ENCODE measurements at regions of chr16 and their contacts with region 1.

Region 1: DNA sequence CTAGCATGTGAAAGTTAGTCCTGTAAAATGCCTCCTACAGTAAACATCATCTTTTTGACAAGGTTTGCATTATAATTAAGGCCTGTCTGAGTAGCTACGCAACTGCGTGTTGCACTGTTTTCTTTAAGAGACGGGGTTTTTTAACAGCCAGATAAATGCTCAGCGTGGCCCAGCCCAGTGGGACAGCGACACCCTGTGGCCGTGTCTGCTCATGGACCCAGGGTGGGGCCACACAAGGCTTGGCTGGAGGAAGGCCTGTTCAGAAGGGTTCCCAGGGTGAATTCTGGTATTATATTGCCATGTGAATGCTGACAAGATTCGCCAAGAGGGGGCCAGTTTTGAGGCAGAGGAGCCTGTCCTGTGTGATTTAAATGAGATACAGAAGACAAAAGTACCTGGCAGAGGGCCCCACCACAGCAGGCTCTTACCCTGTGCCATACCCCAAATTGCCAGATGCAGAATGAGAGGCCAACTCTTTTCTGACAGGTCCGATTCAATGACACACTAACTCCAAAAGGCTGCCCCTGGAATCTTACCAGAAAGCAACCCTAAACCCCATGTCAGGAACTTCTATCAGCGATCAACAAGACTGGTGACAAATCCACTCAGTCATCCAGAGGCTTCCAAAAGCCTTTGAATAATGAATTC is 65.9 kb upstream of the IRX6 start:
- DNase-seq: peak; percentile 58
- ATAC-seq: peak; percentile 98
- H3K4me3 ChIP-seq: no peak overlapping the region
- H3K27ac ChIP-seq: no peak overlapping the region
- H3K4me1 ChIP-seq: no peaks in the 10 kb centered on the region
- H3K27me3 ChIP-seq: peaks cover 4% of the 10 kb centered on the region; the same call in 1 of the 2 replicates
- CTCF ChIP-seq: peak; percentile 65 to 95 (median 95)
- POLR2A ChIP-seq: no peak
- RAD21 ChIP-seq: peak; percentile 87

Region 2: DNA sequence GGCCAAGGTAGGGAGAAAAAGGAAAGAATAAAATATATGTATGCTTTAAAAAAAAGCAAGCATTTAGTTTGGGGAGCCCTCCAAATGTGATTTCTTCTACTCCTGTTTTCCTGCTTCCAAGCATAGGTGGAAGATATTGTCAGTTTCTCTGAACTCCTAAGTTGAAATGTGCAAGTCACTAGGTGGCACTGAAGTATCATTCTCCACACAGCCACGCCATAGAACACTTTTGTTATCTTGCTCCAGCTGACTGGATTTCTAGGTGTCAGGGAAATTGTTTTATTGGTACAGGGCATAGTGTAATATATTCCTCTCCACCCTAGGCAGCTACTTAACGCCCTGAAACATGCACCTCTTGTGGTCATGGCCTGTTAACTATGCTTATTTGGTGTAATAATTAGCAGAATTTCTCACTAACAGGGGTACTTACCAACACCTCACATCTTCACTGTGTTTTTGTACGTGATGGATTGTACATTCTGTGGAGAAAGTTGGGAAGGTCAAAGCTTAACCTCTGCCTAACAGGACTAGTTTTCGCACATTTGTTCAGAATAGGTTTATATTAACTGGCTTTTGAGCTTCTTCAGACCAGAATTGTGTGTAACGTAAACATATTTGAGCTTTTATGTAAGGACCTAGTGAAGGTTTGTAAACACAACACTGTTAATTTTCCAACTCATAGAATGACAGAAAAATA is 1484.8 kb before region 1 on chr16:
- CTCF ChIA-PET with region 1: no interaction called
- POLR2A ChIA-PET with region 1: no interaction called
- RAD21 ChIA-PET with region 1: no interaction called
- intact Hi-C with region 1: loop called (anchors 5 kb)
- DNase-seq: no peak
- ATAC-seq: peak; percentile 51
- H3K4me3 ChIP-seq: no peak overlapping the region
- H3K27ac ChIP-seq: no peak overlapping the region
- H3K4me1 ChIP-seq: peaks cover 32 to 40% of the 10 kb centered on the region in 2 experiments
- H3K27me3 ChIP-seq: no peaks in the 10 kb centered on the region
- CTCF ChIP-seq: peak; percentile 46 to 68 (median 56); a peak in 4 of 6 replicates
- POLR2A ChIP-seq: no peak
- RAD21 ChIP-seq: peak; percentile 91

Region 3: DNA sequence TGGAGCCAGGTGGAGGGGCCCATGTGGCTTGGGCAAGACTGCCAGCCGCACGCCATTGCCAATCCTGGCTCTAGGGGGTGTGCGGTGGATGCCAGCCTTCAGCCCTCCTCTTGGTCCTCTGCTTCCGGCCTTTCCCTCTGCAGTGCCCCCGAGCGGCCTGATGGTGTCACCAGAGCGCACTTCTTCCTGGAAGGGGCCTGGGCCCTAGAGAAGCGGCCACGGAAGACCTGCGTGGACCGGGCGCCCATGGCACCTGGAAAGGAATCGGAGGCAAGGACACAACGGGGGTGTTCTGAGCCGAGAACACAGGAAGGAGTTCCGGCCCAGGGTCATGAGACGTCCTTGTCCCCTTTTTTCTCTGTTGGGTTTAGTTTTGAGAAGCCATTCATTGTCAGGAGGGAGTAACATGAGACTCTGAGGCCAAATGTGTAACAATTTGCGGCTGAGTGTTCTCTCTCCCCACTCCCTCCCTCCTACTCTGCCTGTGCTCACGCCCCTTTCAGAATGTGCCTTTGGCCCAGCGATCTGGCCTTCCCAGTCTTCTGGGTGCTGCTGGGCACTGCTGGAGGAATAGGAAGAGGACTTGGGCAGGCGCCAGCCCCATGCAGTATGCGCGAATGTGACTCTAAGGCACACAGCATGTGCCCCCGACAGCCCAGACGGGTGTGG is 1064.3 kb before region 1 on chr16:
- CTCF ChIA-PET with region 1: no interaction called
- POLR2A ChIA-PET with region 1: no interaction called
- RAD21 ChIA-PET with region 1: no interaction called
- intact Hi-C with region 1: loop called (anchors 10 kb)
- DNase-seq: peak; percentile 59
- ATAC-seq: peak; percentile 99
- H3K4me3 ChIP-seq: peak overlapping the region; percentile 21 to 28; a peak in 3 of 4 replicates
- H3K27ac ChIP-seq: peak overlapping the region; percentile 13; the same call in 1 of the 2 replicates
- H3K4me1 ChIP-seq: peaks cover 0 to 9% of the 10 kb centered on the region in 2 experiments; a peak in 3 of 4 replicates
- H3K27me3 ChIP-seq: no peaks in the 10 kb centered on the region; the same call in 1 of the 2 replicates
- CTCF ChIP-seq: peak; percentile 77 to 94 (median 90)
- POLR2A ChIP-seq: no peak
- RAD21 ChIP-seq: peak; percentile 72

Region 4: GRCh38 chr16:54633943-54634362 is 624.1 kb before region 1 on chr16:
- CTCF ChIA-PET with region 1: no interaction called
- POLR2A ChIA-PET with region 1: no interaction called
- RAD21 ChIA-PET with region 1: no interaction called
- intact Hi-C with region 1: loop called (anchors 2 kb)
- DNase-seq: peak; percentile 39
- ATAC-seq: peak; percentile 88
- H3K4me3 ChIP-seq: peak overlapping the region; percentile 11 to 24; a peak in 1 of 4 replicates
- H3K27ac ChIP-seq: no peak overlapping the region
- H3K4me1 ChIP-seq: peaks cover 0 to 4% of the 10 kb centered on the region in 2 experiments; a peak in 1 of 4 replicates
- H3K27me3 ChIP-seq: 0 out of 2 replicates have a peak, but pooled peaks cover 4% of the 10 kb centered on the region
- CTCF ChIP-seq: peak; percentile 54 to 83 (median 81); a peak in 5 of 6 replicates
- POLR2A ChIP-seq: no peak
- RAD21 ChIP-seq: peak; percentile 70

Region 5: DNA sequence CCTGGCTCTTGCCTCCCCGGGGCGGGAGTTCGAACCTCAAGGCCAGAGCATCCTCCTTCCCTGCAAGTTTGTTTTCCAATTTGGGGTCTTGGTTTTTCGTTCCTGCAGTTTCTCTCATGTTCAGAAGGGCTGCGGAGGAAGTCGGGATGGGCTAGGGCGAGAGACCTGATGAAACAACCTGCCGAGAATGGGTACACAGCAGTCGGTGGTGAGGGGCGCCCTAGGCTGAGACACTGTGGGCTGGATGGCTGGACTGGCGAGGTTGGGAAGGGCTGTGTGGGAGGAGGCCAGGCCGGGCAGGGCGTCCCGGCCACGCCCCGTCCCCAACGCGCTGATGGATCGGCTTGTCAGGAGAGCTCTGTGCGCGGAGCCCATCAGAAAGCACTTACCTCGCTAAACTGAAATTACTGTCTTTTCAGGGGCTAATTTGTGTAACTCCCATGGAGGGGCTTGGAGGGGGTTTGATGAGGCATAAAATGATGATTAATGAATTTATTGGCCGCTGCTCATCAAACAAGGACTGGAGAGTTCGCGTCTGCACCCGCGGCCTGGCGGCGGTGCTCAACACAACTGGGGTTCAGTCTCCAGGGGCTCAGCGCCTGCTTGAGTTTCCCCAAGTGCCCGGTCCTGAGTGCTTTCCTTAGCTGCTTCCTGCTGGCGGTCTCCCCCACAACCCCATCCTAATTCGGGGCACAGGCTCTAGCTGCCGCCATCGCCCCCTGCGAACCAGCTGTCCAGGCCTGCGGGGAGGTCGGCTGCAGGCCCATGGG is 318.4 kb before region 1 on chr16:
- CTCF ChIA-PET with region 1: no interaction called
- POLR2A ChIA-PET with region 1: no interaction called
- RAD21 ChIA-PET with region 1: no interaction called
- intact Hi-C with region 1: loop called (anchors 10 kb)
- DNase-seq: no peak
- ATAC-seq: no peak
- H3K4me3 ChIP-seq: no peak overlapping the region
- H3K27ac ChIP-seq: no peak overlapping the region
- H3K4me1 ChIP-seq: no peaks in the 10 kb centered on the region
- H3K27me3 ChIP-seq: 0 out of 2 replicates have a peak, but pooled peaks cover 4% of the 10 kb centered on the region
- CTCF ChIP-seq: no peak
- POLR2A ChIP-seq: no peak
- RAD21 ChIP-seq: no peak

Region 6: GRCh38 chr16:55120408-55120807 is 137.7 kb before region 1 on chr16:
- CTCF ChIA-PET with region 1: interaction called, 10 read pairs
- POLR2A ChIA-PET with region 1: no interaction called
- RAD21 ChIA-PET with region 1: no interaction called
- intact Hi-C with region 1: loop called (anchors 1 kb)
- DNase-seq: no peak
- ATAC-seq: peak; percentile 63
- H3K4me3 ChIP-seq: no peak overlapping the region
- H3K27ac ChIP-seq: no peak overlapping the region
- H3K4me1 ChIP-seq: no peaks in the 10 kb centered on the region
- H3K27me3 ChIP-seq: peaks cover 14% of the 10 kb centered on the region; the same call in 1 of the 2 replicates
- CTCF ChIP-seq: 0 out of 6 replicates have a peak, but pooled peaks of 1 of the 3 experiments have one; percentile 18
- POLR2A ChIP-seq: no peak
- RAD21 ChIP-seq: peak; percentile 36